Natural killer cell (primary cell): ENCODE measurements at regions of chr21 and their contacts with region 1.

Region 1: GRCh38 chr21:31731802-31732596 is at the start of gene SCAF4:
- DNase-seq: peak; percentile 77 to 90
- ATAC-seq: peak; percentile 87 to 97 (median 90)
- H3K4me3 ChIP-seq: peak within 1 kb of the TSS; percentile 62
- H3K4me3 Mint-ChIP-seq: peak within 1 kb of the TSS; percentile 84
- H3K27ac ChIP-seq: peak within 1 kb of the TSS; percentile 82
- H3K27ac Mint-ChIP-seq: no peak within 1 kb of the TSS
- H3K4me1 ChIP-seq: peaks cover 21% of the 10 kb centered on the region
- H3K4me1 Mint-ChIP-seq: peaks cover 4 to 17% of the 10 kb centered on the region in 2 donors
- H3K27me3 ChIP-seq: no peaks in the 10 kb centered on the region
- H3K27me3 Mint-ChIP-seq: no peaks in the 10 kb centered on the region
- CTCF ChIP-seq: no peak
- total RNA-seq, gene SCAF4: 93.2 to 109 (median 101) TPM

Region 2: DNA sequence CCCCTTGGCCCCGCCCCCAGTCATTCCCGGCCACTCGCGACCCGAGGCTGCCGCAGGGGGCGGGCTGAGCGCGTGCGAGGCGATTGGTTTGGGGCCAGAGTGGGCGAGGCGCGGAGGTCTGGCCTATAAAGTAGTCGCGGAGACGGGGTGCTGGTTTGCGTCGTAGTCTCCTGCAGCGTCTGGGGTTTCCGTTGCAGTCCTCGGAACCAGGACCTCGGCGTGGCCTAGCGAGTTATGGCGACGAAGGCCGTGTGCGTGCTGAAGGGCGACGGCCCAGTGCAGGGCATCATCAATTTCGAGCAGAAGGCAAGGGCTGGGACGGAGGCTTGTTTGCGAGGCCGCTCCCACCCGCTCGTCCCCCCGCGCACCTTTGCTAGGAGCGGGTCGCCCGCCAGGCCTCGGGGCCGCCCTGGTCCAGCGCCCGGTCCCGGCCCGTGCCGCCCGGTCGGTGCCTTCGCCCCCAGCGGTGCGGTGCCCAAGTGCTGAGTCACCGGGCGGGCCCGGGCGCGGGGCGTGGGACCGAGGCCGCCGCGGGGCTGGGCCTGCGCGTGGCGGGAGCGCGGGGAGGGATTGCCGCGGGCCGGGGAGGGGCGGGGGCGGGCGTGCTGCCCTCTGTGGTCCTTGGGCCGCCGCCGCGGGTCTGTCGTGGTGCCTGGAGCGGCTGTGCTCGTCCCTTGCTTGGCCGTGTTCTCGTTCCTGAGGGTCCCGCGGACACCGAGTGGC is 72.3 kb before region 1 on chr21 and contains the start of gene SOD1:
- intact Hi-C with region 1: loop called (anchors 1 kb)
- DNase-seq: peak; percentile 95 to 98
- ATAC-seq: peak; percentile 95 to 99 (median 96)
- H3K4me3 ChIP-seq: peak within 1 kb of the TSS; percentile 69
- H3K4me3 Mint-ChIP-seq: peak within 1 kb of the TSS; percentile 99
- H3K27ac ChIP-seq: peak within 1 kb of the TSS; percentile 70
- H3K27ac Mint-ChIP-seq: peak within 1 kb of the TSS; percentile 92 to 94
- H3K4me1 ChIP-seq: peaks cover 21% of the 10 kb centered on the region
- H3K4me1 Mint-ChIP-seq: peaks cover 44 to 53% of the 10 kb centered on the region in 2 donors
- H3K27me3 ChIP-seq: no peaks in the 10 kb centered on the region
- H3K27me3 Mint-ChIP-seq: no peaks in the 10 kb centered on the region
- CTCF ChIP-seq: no peak
- total RNA-seq, gene SOD1: 57.9 to 75.7 (median 64.8) TPM